Heart right ventricle (tissue), 16 donors: ENCODE measurements at regions of chr7 and their contacts with region 1.

Region 1: DNA sequence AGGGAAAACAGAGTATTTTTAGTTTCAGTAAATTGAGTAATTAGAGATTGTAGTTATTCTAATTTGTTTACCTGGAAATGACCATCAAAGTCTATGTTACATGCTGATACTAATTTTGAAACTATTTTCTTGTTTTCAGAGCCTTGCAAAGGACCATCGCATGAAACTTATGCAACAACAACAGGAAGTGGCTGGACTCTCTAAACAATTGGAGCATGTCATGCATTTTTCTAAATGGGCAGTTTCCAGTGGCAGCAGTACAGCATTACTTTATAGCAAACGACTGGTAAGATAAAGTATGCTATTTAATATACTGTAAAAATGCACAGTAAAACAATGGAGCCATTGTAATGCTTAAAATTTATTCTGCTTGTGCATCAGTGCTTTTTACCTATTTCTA is 78.5 kb downstream of the TRIM24 start:
- DNase-seq: no peak
- ATAC-seq: no peak
- H3K4me3 ChIP-seq: no peak overlapping the region
- H3K27ac ChIP-seq: peak overlapping the region in 2 of 10 donors; percentile 0 to 3
- H3K4me1 ChIP-seq: peaks cover 0 to 12% (median 0%) of the 10 kb centered on the region in 9 donors
- H3K27me3 ChIP-seq: no peaks in the 10 kb centered on the region
- CTCF ChIP-seq: no peak

Region 2: GRCh38 chr7:138002096-138002827 is 536.3 kb before region 1 on chr7:
- intact Hi-C with region 1: no loop called
- DNase-seq: peak; percentile 98 to 99
- ATAC-seq: peak; percentile 95 to 98 (median 96)
- H3K4me3 ChIP-seq: peak overlapping the region; percentile 66 to 99 (median 84)
- H3K27ac ChIP-seq: peak overlapping the region; percentile 70 to 97 (median 94)
- H3K4me1 ChIP-seq: peaks cover 2 to 40% (median 33%) of the 10 kb centered on the region in 9 donors
- H3K27me3 ChIP-seq: no peaks in the 10 kb centered on the region
- CTCF ChIP-seq: peak; percentile 84 to 98 (median 95)

Region 3: GRCh38 chr7:138500892-138501291 is 37.6 kb before region 1 on chr7:
- intact Hi-C with region 1: no loop called
- DNase-seq: no peak
- ATAC-seq: no peak
- H3K4me3 ChIP-seq: no peak overlapping the region
- H3K27ac ChIP-seq: no peak overlapping the region
- H3K4me1 ChIP-seq: peaks cover 0 to 15% (median 0%) of the 10 kb centered on the region in 9 donors
- H3K27me3 ChIP-seq: no peaks in the 10 kb centered on the region
- CTCF ChIP-seq: no peak

Region 4: GRCh38 chr7:138595454-138595853 is 56.9 kb after region 1 on chr7:
- intact Hi-C with region 1: loop called in 1 of 10 experiments (anchors 10 kb)
- DNase-seq: no peak
- ATAC-seq: no peak
- H3K4me3 ChIP-seq: no peak overlapping the region
- H3K27ac ChIP-seq: no peak overlapping the region
- H3K4me1 ChIP-seq: no peaks in the 10 kb centered on the region
- H3K27me3 ChIP-seq: no peaks in the 10 kb centered on the region
- CTCF ChIP-seq: no peak